ENCODE measurements at regions of chr2 and their contacts with region 1.

Region 1: DNA sequence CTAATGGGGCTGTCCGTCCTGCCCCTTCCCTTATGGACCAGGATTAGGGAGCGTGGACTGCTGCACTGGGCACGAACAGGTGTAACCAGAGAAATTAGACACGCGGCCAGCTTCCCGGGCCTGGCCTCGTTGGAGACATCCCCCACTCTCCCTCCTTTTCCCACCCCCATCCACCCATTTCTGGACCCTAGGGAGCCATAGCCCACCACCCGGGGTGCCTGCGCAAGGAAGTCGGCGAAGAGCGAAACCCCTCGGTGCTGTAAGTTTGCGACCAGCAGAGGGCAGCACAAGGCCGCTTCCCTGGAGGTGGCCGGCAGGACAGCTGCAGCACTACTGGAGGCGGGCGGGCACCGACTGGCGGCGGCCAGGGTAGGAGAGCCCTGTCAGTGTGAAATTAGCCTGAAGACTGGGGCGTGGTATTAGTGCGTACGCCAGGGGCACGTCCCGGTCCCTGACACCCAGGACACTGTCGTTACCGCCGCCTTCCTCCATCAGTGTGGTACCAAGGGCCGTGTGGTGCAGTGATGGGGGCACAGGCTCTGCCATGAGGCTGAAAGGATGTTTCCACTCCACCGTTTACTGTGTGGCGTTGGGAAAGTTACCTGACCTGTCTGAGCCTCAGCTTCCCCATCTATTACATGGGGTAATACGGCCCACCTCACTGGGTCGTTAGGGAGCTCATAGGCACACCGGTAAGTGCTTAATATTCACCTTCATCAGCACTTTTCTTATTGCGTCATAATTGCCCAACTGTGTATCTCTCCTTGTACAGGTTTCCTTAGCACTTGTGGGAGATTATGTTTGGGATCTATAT is 36.0 kb upstream of the CD207 start:
- DNase-seq: peak; percentile 84
- H3K4me3 ChIP-seq: peak overlapping the region; percentile 25
- H3K27ac ChIP-seq: no peak overlapping the region
- H3K4me1 ChIP-seq: peaks cover 8% of the 10 kb centered on the region
- H3K27me3 ChIP-seq: peaks cover 73% of the 10 kb centered on the region
- CTCF ChIP-seq: peak; percentile 92

Region 2: GRCh38 chr2:70919672-70920366 is 48.2 kb after region 1 on chr2:
- intact Hi-C with region 1: loop called (anchors 5 kb)
- DNase-seq: peak; percentile 78
- H3K4me3 ChIP-seq: no peak overlapping the region
- H3K27ac ChIP-seq: no peak overlapping the region
- H3K4me1 ChIP-seq: peaks cover 8% of the 10 kb centered on the region
- H3K27me3 ChIP-seq: peaks cover 63% of the 10 kb centered on the region
- CTCF ChIP-seq: peak; percentile 92

Region 3: GRCh38 chr2:70948337-70949003 is 76.9 kb after region 1 on chr2:
- intact Hi-C with region 1: loop called (anchors 5 kb)
- DNase-seq: peak; percentile 77
- H3K4me3 ChIP-seq: peak overlapping the region; percentile 42
- H3K27ac ChIP-seq: no peak overlapping the region
- H3K4me1 ChIP-seq: peaks cover 10% of the 10 kb centered on the region
- H3K27me3 ChIP-seq: peaks cover 51% of the 10 kb centered on the region
- CTCF ChIP-seq: peak; percentile 90